ENCODE measurements at regions of chr17 and their contacts with region 1.

Region 1: DNA sequence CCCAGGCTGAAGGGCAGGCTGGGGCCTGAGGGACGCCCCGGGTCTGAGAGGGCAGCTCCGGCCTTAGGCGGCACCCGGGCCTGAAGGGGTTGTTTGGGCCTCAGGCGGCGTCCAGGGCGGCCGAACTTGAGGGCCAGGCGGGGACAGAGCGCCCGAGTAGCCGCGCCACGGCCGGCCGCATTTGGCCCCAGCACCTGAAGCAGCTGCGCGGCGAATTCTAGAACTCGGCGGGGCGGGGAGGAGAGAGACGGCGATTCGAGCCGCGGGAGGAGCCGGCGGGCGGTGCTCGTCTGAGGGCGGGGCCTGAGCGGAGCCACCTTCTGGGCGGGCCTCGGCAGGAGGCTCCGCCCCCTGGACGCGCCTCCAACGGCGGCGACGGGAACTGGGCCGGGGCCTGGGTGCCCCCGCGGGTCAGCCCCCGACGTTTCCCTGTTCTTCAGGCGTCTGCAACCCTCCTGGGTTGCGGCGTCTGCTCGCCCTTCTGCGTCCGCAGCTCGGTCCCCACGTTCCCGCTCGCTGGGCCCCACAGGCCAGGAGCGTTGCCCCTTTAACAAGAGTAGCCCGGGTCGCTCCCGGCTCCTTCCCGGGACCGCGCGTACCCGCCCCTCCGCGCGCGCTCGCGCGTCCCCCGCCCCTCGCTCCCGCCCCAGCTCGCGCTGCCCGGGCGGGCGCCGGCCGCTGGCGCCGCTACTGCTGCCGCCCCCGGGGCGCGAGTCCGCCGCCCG is at the starts of genes INCA1 and KIF1C:
- DNase-seq: peak; percentile 98
- total RNA-seq, gene INCA1: 1.8 TPM
- total RNA-seq, gene KIF1C: 646 TPM

Region 2: DNA sequence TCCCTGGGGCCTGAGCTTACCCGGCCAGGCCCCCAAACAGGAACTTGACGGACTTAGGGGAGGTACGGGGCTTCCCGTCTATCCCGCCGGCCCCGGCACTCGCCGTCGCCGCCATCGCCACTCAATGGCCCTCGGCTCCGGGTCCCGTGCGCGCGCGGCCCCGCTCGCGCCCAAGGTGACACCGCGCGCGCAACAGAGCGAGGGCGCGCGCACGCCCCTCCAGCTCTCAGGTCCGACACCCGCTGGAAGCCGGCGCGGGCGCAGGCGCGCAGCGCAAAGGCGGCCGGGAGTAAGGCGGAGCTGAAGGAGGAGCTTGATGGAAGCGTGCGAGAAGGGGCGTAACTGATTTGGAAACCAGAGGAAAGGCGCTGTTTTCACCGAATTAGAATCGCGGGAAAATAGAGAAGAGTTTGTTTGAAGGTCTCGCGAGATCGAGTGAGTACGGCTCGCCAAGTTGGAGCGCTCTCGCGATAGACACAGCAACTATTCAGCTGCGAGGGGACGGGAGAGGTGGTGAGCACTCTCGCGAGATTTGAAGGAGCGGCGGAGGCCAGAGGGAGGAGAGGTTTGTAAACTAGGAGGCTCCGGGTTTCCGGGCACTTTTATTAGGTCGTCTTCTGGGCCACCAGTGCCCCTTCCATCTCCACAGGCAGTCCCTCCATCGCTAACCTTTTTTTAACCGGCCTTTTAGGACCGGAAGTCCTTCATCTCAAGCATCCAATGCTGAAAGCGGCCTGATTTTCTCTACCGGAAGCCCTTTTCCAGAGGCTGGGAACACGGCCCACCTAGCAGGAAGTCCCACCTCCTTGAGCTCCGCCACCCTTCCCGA is 57.5 kb before region 1 on chr17 and contains the starts of genes RNF167 and SLC25A11:
- intact Hi-C with region 1: loop called (anchors 2 kb)
- DNase-seq: peak; percentile 97
- total RNA-seq, gene RNF167: 84.7 TPM
- total RNA-seq, gene SLC25A11: 176 TPM

Region 3: DNA sequence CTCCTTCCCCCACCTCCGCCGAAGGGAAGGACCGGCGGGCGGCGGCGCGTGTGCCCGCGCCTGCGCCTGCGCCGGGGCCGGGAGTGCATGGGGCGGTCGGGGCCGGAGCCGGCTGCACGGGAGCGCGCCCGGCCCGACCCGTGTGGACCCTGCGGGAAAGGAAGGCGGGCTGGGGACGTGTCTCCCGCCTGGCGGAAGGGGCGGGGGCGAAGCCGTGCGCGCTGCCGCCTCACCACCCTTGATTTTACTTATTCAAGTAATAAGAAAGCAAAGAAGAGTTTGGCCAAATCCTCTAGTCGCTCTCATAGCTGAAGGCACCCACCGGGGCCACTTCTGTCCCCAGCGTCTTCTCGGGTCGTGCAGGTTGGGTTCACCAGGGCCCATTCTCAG is 48.5 kb before region 1 on chr17:
- intact Hi-C with region 1: loop called (anchors 2 kb)
- DNase-seq: peak; percentile 89

Region 4: GRCh38 chr17:4980644-4981216 is 16.7 kb before region 1 on chr17:
- intact Hi-C with region 1: loop called (anchors 2 kb)
- DNase-seq: no peak